T-cell (primary cell): ENCODE measurements at regions of chr7 and their contacts with region 1.

Region 1: GRCh38 chr7:44709011-44709915 is 39.4 kb upstream of the ZMIZ2 start:
- DNase-seq: no peak
- ATAC-seq: no peak
- H3K4me3 ChIP-seq: no peak overlapping the region
- H3K4me3 Mint-ChIP-seq: no peak overlapping the region
- H3K27ac ChIP-seq: no peak overlapping the region
- H3K27ac Mint-ChIP-seq: peak overlapping the region; percentile 16 to 23
- H3K4me1 ChIP-seq: peaks cover 0 to 9% of the 10 kb centered on the region in 2 experiments
- H3K4me1 Mint-ChIP-seq: peaks cover 7 to 23% (median 12%) of the 10 kb centered on the region in 3 donors
- H3K27me3 ChIP-seq: no peaks in the 10 kb centered on the region
- H3K27me3 Mint-ChIP-seq: no peaks in the 10 kb centered on the region

Region 2: DNA sequence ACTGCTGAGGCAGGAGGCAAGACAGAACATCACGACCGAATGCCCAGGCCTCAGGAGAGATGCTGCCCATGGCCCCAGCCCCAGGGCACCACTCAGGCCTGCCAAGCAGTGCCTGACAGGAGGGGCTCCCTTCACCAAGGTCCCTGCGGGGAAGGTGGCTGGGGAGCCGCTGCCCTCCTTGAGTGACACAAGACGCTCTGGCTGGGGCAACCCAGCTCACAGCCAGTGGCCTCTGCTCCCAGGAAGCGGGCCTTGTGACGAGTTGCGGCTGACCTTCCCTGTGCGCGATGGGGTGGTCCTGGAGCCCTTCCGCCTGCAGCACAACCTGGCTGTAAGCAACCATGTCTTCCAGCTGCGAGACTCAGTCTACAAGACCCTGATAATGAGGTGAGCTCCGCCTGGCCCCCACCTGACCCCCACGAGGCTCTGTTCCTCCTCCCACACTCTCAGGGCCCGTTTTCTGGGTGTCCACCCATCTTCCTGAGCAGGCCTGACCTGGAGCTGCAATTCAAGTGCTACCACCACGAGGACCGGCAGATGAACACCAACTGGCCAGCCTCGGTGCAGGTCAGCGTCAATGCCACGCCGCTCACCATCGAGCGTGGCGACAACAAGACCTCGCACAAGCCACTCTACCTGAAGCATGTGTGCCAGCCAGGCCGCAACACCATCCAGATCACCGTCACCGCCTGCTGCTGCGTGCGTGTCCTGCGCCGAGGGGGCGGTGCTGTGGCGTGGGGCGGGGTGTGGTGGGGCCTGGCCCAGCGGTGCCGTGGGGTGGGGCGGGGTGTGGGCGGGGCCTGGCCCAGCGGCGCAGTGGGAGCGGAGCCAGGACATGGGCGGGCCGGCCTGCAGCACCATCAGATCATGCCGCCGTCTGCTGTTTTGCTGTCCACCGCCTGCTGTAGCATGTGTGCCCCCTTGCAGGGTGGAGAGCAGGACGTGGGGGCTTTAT is 52.2 kb after region 1 on chr7:
- CTCF ChIA-PET with region 1: no interaction called
- POLR2A ChIA-PET with region 1: no interaction called
- DNase-seq: no peak
- ATAC-seq: no peak
- H3K4me3 ChIP-seq: no peak overlapping the region
- H3K4me3 Mint-ChIP-seq: no peak overlapping the region
- H3K27ac ChIP-seq: no peak overlapping the region
- H3K27ac Mint-ChIP-seq: no peak overlapping the region
- H3K4me1 ChIP-seq: no peaks in the 10 kb centered on the region
- H3K4me1 Mint-ChIP-seq: no peaks in the 10 kb centered on the region
- H3K27me3 ChIP-seq: no peaks in the 10 kb centered on the region
- H3K27me3 Mint-ChIP-seq: no peaks in the 10 kb centered on the region

Region 3: GRCh38 chr7:45151967-45152366 is 442.7 kb after region 1 on chr7:
- CTCF ChIA-PET with region 1: no interaction called
- POLR2A ChIA-PET with region 1: interaction called in 1 of 2 experiments, 10 read pairs
- DNase-seq: no peak
- ATAC-seq: no peak
- H3K4me3 ChIP-seq: no peak overlapping the region
- H3K4me3 Mint-ChIP-seq: no peak overlapping the region
- H3K27ac ChIP-seq: no peak overlapping the region
- H3K27ac Mint-ChIP-seq: no peak overlapping the region
- H3K4me1 ChIP-seq: no peaks in the 10 kb centered on the region
- H3K4me1 Mint-ChIP-seq: peaks cover 3 to 11% (median 3%) of the 10 kb centered on the region in 3 donors
- H3K27me3 ChIP-seq: peaks cover 0 to 56% of the 10 kb centered on the region in 2 experiments
- H3K27me3 Mint-ChIP-seq: peaks cover 15 to 38% of the 10 kb centered on the region in 2 donors